HEK293T (cell line): ENCODE measurements at regions of chr2 and their contacts with region 1.

Region 1: DNA sequence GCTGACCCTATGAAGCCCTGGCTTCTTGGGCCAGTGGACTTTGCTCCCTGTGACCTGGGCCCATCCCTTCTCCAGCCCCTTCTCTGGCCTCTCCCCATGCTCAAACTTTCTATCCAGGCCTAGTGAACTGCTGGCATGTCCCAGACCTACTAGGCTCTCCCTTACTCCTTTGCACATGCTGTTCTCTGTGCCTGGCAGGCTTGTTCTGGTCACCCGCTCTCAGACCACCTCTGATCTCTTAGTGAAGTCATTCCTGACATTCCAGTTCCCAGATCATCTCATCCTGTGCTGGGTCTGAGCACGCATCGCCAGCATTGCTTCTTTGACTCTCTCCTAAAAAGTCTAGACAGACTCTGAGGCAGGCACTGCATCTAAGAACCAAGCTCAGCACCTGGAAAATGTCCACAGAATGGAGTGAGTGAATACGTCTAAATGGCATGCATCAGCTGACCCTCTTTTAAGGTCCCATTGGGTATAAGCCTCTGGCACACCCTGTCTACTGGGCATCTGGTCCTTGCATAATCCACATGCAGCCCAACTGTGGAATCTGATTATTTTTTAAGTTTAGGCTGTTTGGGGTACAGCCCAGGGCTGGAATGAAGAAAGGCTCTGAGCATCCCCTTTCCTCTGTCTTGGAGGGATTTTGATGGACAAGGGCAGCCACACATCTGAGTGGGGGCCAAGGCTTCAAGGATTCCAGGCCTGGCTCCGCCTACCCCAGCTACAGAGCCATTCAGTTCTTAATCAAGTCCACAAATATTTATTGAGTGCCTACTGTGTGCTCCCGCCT is 130.6 kb upstream of the HAAO start:
- DNase-seq: no peak

Region 2: GRCh38 chr2:43005245-43005974 is 82.4 kb after region 1 on chr2:
- CTCF ChIA-PET with region 1: interaction called, 11 read pairs
- POLR2A ChIA-PET with region 1: no interaction called
- DNase-seq: no peak